Caco-2 (cell line): ENCODE measurements at regions of chr2 and their contacts with region 1.

Region 1: DNA sequence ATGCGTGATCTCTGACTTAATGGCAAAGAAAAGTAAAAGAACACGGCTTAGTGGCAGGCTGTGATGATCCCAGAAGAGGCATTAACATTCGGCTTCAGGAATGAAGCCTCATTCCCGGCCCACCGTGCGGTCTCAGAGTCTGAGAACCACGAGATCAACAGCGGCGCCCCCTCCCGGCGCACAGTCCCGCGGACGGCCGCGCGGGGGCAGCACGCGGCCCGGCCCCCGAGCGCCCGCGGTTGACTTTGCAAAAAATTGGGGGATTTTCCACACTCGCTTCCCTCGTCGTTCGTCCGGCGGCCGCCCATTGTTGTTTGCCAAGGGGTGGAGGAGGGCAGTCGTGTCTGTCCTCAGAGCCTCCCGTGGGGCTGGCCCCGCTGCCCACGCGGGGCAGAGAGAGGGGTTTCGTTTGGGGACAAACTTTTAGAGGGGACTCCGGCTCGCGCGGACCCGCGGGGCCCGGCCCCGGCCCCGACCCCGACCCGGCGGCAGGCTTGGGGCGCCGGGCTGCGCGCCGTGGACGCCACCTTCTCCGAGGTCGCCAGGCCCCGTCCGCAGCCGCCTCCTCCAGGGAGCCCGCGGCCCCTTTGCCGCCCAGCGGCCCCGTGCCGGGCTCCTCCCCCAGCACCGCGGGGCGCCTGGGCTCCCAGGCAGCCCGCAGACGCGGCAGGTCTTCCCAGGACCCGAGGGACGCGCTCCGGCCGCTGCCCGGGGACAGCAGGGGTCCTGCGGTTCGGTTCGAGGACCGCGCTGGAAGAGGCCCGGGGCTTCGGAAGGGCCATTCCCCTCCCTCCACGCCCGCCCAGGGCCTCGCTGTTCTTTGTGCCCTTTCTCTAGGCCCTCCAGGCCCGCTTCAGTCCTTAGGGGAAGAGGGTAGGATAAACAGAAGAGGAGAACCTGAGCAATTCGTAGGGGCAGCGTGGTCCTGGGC is 3.4 kb upstream of the HS6ST1 start:
- DNase-seq: peak; percentile 78 to 89
- H3K4me3 ChIP-seq: peak overlapping the region; percentile 69
- H3K4me3 Mint-ChIP-seq: peak overlapping the region; percentile 65
- H3K27ac Mint-ChIP-seq: no peak overlapping the region
- H3K4me1 ChIP-seq: peaks cover 14% of the 10 kb centered on the region
- H3K4me1 Mint-ChIP-seq: no peaks in the 10 kb centered on the region
- H3K27me3 ChIP-seq: no peaks in the 10 kb centered on the region
- H3K27me3 Mint-ChIP-seq: no peaks in the 10 kb centered on the region
- CTCF ChIP-seq: peak; percentile 62 to 96

Region 2: DNA sequence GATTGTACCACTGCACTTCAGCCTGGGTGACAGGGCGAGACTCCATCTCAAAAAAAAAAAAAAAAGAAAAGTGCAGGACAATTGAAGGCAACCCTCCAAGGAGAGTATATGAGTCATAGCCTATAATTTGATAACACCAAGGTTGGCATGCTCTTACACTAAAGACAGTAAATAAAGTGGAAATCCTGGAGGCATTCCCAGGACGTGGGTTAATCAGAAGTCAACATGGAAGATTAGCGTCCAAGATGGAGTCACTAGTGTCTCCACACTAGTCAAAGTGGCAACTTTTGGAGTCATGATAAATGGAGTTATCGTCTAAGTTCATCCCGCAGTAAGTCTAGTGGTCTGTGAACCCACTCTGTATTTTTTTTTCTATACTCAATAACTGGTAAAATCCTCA is 252.3 kb before region 1 on chr2:
- CTCF ChIA-PET with region 1: no interaction called
- POLR2A ChIA-PET with region 1: no interaction called
- intact Hi-C with region 1: loop called (anchors 10 kb)
- DNase-seq: no peak
- H3K4me3 ChIP-seq: no peak overlapping the region
- H3K4me3 Mint-ChIP-seq: no peak overlapping the region
- H3K27ac Mint-ChIP-seq: no peak overlapping the region
- H3K4me1 ChIP-seq: no peaks in the 10 kb centered on the region
- H3K4me1 Mint-ChIP-seq: no peaks in the 10 kb centered on the region
- H3K27me3 ChIP-seq: no peaks in the 10 kb centered on the region
- H3K27me3 Mint-ChIP-seq: no peaks in the 10 kb centered on the region
- CTCF ChIP-seq: no peak

Region 3: DNA sequence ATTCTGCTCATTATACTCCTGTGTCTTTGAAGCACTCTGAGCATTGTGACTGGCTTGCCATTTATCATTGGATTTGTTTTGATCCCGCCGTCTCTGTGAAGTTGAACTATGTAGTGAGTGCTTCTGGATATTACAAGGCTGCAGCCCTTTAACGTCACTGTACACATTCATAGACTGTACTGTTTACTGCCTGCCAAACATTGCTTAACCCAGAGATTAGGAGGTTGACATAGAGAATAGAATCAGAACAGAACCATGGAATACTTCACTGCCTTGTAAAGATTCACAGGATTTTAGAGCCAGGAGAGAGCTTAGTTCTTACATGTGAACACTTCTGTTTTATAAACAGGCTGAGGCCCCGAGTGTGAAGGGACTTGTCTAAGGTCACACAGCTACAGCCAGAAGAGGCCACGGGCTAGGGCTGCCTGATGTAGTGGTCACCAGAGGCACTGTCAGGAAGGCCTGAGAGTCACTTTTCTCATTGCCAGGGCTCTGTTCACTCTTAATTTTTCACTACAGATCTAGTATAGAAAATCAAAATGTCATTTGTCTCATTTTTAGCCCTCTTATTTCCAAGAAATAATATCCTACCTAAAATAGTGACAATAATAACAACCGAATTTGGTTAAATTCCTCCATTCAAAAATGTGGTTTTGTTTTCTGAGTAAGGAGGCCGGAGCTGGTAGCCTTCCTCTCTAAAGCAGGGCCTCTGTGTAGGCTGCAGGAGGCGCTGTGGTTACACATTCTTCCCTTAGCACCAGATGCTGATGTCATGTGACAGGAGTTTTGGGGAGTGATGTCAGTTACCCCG is 143.2 kb before region 1 on chr2:
- CTCF ChIA-PET with region 1: no interaction called
- POLR2A ChIA-PET with region 1: no interaction called
- intact Hi-C with region 1: loop called (anchors 5 kb)
- DNase-seq: peak; percentile 46 to 60
- H3K4me3 ChIP-seq: no peak overlapping the region
- H3K4me3 Mint-ChIP-seq: no peak overlapping the region
- H3K27ac Mint-ChIP-seq: no peak overlapping the region
- H3K4me1 ChIP-seq: no peaks in the 10 kb centered on the region
- H3K4me1 Mint-ChIP-seq: no peaks in the 10 kb centered on the region
- H3K27me3 ChIP-seq: no peaks in the 10 kb centered on the region
- H3K27me3 Mint-ChIP-seq: no peaks in the 10 kb centered on the region
- CTCF ChIP-seq: peak; percentile 65 to 76

Region 4: DNA sequence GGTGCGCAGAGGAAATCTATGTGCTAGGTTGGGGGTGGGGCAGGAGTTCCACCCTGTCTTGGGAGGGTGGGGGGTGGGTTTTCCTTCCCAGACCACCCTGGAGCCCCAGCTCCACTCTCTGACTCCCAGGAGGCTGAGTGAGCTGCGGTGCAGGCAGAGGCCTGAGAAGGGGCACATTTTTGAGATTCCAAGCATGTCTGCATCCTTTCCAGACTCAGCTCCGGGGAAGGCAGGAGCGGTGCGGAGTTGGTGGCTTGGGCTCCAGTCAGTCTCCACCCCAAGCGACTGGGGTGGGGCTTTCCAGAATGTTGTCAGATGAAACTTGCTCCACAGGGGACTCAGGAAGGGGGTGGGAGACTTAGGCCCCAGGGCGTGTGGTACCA is 40.8 kb after region 1 on chr2:
- CTCF ChIA-PET with region 1: interaction called, 3 read pairs
- POLR2A ChIA-PET with region 1: no interaction called
- intact Hi-C with region 1: loop called (anchors 5 kb)
- DNase-seq: peak; percentile 75 to 88
- H3K4me3 ChIP-seq: no peak overlapping the region
- H3K4me3 Mint-ChIP-seq: peak overlapping the region; percentile 24
- H3K27ac Mint-ChIP-seq: peak overlapping the region; percentile 96
- H3K4me1 ChIP-seq: peaks cover 28% of the 10 kb centered on the region
- H3K4me1 Mint-ChIP-seq: peaks cover 13% of the 10 kb centered on the region
- H3K27me3 ChIP-seq: no peaks in the 10 kb centered on the region
- H3K27me3 Mint-ChIP-seq: no peaks in the 10 kb centered on the region
- CTCF ChIP-seq: no peak

Region 5: DNA sequence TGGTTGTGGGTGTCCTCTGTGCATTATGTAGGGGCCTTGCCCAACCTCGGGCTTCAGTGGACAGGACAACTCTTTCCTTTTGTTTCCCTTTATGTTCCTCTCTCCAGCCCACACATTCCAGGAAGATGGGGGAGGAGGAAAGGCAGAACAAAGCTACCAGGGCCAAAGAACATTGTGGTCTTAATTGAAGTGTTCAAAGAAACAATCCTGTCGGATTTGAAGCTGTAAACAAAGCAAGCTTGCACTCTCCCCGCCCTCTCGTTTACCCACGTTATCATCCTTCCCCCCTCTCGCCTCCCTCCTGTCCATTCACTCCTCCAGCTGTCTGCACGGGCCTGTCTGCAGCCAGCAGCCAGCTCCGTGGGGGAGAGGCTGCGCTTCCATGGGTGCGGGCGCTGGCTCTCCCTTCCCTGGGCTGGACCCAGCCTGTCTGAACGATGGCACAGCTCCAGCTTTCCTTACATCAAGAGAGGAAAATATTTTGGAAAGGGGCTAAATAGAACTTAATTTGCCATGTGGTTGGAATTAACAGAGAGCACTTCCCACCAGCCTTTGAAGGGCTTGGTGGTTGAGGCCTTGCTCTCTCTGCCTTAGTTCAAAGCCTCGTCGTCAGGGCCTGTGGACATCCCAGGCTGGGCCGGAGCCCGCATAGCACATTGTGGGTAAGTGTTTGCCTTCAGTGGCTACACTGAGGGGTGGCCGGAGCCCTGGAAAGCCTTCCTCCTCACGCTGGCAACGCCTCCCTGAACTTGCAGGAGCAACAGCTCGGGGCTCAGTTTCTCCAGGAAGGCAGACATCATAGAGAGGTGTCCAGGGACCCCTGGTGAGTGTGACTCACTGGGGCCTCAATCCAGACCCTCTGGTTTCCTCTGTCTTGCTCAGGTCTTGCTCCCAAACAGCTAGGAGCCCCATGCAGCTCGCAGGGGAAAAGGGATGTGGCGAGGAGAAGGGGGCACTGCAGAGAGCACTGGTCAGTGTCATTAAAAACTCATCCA is 57.3 kb after region 1 on chr2:
- CTCF ChIA-PET with region 1: no interaction called
- POLR2A ChIA-PET with region 1: no interaction called
- intact Hi-C with region 1: loop called (anchors 5 kb)
- DNase-seq: peak; percentile 74 to 77
- H3K4me3 ChIP-seq: no peak overlapping the region
- H3K4me3 Mint-ChIP-seq: peak overlapping the region; percentile 53
- H3K27ac Mint-ChIP-seq: peak overlapping the region; percentile 64
- H3K4me1 ChIP-seq: peaks cover 53% of the 10 kb centered on the region
- H3K4me1 Mint-ChIP-seq: peaks cover 21% of the 10 kb centered on the region
- H3K27me3 ChIP-seq: no peaks in the 10 kb centered on the region
- H3K27me3 Mint-ChIP-seq: no peaks in the 10 kb centered on the region
- CTCF ChIP-seq: no peak

Region 6: GRCh38 chr2:128531856-128532255 is 209.8 kb after region 1 on chr2:
- CTCF ChIA-PET with region 1: no interaction called
- POLR2A ChIA-PET with region 1: no interaction called
- intact Hi-C with region 1: loop called (anchors 5 kb)
- DNase-seq: no peak
- H3K4me3 ChIP-seq: no peak overlapping the region
- H3K4me3 Mint-ChIP-seq: no peak overlapping the region
- H3K27ac Mint-ChIP-seq: no peak overlapping the region
- H3K4me1 ChIP-seq: no peaks in the 10 kb centered on the region
- H3K4me1 Mint-ChIP-seq: peaks cover 1% of the 10 kb centered on the region
- H3K27me3 ChIP-seq: no peaks in the 10 kb centered on the region
- H3K27me3 Mint-ChIP-seq: peaks cover 2% of the 10 kb centered on the region
- CTCF ChIP-seq: no peak

Region 7: GRCh38 chr2:128756365-128756717 is 434.3 kb after region 1 on chr2:
- CTCF ChIA-PET with region 1: no interaction called
- POLR2A ChIA-PET with region 1: no interaction called
- intact Hi-C with region 1: loop called (anchors 5 kb)
- DNase-seq: no peak
- H3K4me3 ChIP-seq: no peak overlapping the region
- H3K4me3 Mint-ChIP-seq: no peak overlapping the region
- H3K27ac Mint-ChIP-seq: no peak overlapping the region
- H3K4me1 ChIP-seq: no peaks in the 10 kb centered on the region
- H3K4me1 Mint-ChIP-seq: no peaks in the 10 kb centered on the region
- H3K27me3 ChIP-seq: no peaks in the 10 kb centered on the region
- H3K27me3 Mint-ChIP-seq: peaks cover 18% of the 10 kb centered on the region
- CTCF ChIP-seq: no peak